ENCODE measurements at regions of chr1 and their contacts with region 1.

Region 1: DNA sequence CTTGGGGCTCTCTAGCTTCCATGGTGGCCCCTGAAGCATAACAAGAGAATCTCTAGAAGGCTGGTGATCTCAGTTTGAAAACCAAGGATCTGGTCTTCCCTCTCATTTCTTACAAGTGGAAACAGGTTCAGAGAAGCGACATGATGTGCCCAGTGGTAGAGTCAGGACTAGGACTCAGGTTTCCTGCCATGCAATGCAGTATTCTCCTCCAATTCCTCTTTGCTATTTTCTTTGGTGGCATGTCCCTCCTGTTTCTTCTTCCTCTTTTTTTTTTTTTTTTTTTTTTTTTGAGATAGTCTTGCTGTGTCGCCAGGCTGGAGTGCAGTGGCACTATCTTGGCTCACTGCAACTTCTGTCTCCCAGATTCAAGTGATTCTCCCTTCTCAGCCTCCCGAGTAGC is 195.6 kb upstream of the C1orf105 start:
- DNase-seq: no peak
- ATAC-seq: no peak
- H3K4me3 ChIP-seq: no peak overlapping the region
- H3K27ac ChIP-seq: no peak overlapping the region
- H3K4me1 ChIP-seq: no peaks in the 10 kb centered on the region
- H3K27me3 ChIP-seq: no peaks in the 10 kb centered on the region
- CTCF ChIP-seq: no peak
- EP300 ChIP-seq: no peak
- POLR2A ChIP-seq: no peak
- RAD21 ChIP-seq: no peak

Region 2: DNA sequence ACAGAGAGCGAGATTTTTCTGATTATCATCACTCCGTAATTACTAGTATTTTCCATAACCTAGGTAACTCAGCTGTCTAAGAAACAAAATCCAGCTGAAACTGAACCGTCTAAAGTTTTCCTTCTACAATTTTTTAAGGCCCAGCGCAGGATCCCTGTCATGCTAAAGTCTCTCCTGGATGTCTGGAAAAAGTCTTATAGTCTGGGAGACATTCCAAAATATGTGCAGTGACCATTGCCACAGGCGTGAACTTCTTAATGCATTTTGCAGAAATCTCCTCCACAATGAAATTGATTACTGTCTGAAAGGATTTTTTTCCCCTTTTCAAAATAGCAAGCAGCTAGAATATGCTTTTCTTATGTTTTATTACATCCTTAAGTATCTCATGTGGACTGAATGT is 13.7 kb before region 1 on chr1:
- CTCF ChIA-PET with region 1: no interaction called
- POLR2A ChIA-PET with region 1: no interaction called
- RAD21 ChIA-PET with region 1: interaction called, 3 read pairs
- SMC1A ChIA-PET with region 1: interaction called, 10 read pairs
- in situ Hi-C with region 1: no loop called
- intact Hi-C with region 1: no loop called
- DNase-seq: no peak
- ATAC-seq: no peak
- H3K4me3 ChIP-seq: no peak overlapping the region
- H3K27ac ChIP-seq: no peak overlapping the region
- H3K4me1 ChIP-seq: no peaks in the 10 kb centered on the region
- H3K27me3 ChIP-seq: no peaks in the 10 kb centered on the region
- CTCF ChIP-seq: no peak
- EP300 ChIP-seq: no peak
- POLR2A ChIP-seq: no peak
- RAD21 ChIP-seq: no peak